WTC11 (cell line): ENCODE measurements at regions of chr6 and their contacts with region 1.

Region 1: GRCh38 chr6:45714741-45715507 is 300.7 kb downstream of the CLIC5 start:
- DNase-seq: peak; percentile 50
- ATAC-seq: peak; percentile 97
- H3K4me3 Mint-ChIP-seq: no peak overlapping the region
- H3K27ac Mint-ChIP-seq: no peak overlapping the region
- H3K4me1 Mint-ChIP-seq: peaks cover 6% of the 10 kb centered on the region
- H3K27me3 Mint-ChIP-seq: no peaks in the 10 kb centered on the region
- CTCF ChIP-seq: 0 out of 2 replicates have a peak, but pooled peaks have one; percentile 29

Region 2: GRCh38 chr6:44630125-44631028 is 1084.5 kb before region 1 on chr6:
- CTCF ChIA-PET with region 1: interaction called, 22 read pairs
- POLR2A ChIA-PET with region 1: no interaction called
- DNase-seq: peak; percentile 78
- ATAC-seq: peak; percentile 89
- H3K4me3 Mint-ChIP-seq: no peak overlapping the region
- H3K27ac Mint-ChIP-seq: no peak overlapping the region
- H3K4me1 Mint-ChIP-seq: peaks cover 41% of the 10 kb centered on the region
- H3K27me3 Mint-ChIP-seq: peaks cover 4% of the 10 kb centered on the region
- CTCF ChIP-seq: 0 out of 2 replicates have a peak, but pooled peaks have one; percentile 33

Region 3: GRCh38 chr6:45377554-45378333 is 337.2 kb before region 1 on chr6 and contains the start of gene SUPT3H:
- CTCF ChIA-PET with region 1: interaction called, 14 read pairs
- POLR2A ChIA-PET with region 1: no interaction called
- DNase-seq: peak; percentile 87
- ATAC-seq: peak; percentile 92
- H3K4me3 Mint-ChIP-seq: peak within 1 kb of the TSS; percentile 92
- H3K27ac Mint-ChIP-seq: peak within 1 kb of the TSS; percentile 98
- H3K4me1 Mint-ChIP-seq: peaks cover 17% of the 10 kb centered on the region
- H3K27me3 Mint-ChIP-seq: no peaks in the 10 kb centered on the region; the same call in 1 of the 2 replicates
- CTCF ChIP-seq: no peak
- total RNA-seq, gene SUPT3H: 15.3 to 21.9 TPM (median 19.2 TPM) in 3 replicates

Region 4: DNA sequence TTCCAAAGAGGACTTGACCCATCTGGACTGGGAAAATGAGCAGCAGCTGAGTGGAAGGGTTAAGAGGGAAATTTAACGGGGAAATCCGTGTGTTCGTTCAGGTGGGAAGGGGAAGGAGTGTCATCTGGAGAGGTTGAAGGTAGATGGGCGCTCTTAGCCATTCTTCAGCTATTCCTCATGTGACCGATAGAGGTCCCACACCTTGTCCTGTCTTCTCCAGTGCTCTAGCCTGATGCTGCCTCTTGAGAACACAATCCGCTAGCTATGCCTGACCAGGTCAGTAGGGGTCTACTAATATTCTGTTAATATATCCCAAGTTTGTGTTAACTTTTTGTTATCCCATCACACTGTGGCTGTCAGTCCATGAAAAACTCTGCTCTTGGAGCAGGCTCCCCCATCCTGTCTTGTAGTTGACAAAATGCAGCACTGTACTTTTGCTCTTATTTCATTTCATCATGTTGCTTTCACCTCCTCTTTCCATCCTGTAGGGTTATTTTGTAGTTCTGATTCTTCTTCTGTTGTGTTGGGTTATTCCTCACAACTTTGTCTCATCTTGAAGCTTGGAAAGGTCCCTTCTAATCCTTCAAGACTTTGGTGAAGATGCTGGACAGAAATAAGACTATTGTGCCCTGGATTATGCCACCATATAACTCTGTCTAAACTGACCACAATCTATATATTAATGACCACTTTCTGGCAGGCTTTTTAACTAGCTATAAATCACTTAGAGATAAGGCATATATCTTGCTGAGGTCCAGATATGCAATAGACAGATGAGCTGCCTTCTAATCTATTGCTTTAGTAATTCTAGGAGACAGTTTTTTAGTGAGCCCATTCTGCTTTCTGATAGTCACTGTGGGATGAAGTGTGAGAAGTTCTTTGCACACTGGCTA is 213.8 kb before region 1 on chr6:
- CTCF ChIA-PET with region 1: interaction called, 27 read pairs
- POLR2A ChIA-PET with region 1: no interaction called
- DNase-seq: peak; percentile 30
- ATAC-seq: peak; percentile 95
- H3K4me3 Mint-ChIP-seq: no peak overlapping the region
- H3K27ac Mint-ChIP-seq: no peak overlapping the region
- H3K4me1 Mint-ChIP-seq: peaks cover 26% of the 10 kb centered on the region
- H3K27me3 Mint-ChIP-seq: no peaks in the 10 kb centered on the region
- CTCF ChIP-seq: peak; percentile 67; the same call in 1 of the 2 replicates

Region 5: DNA sequence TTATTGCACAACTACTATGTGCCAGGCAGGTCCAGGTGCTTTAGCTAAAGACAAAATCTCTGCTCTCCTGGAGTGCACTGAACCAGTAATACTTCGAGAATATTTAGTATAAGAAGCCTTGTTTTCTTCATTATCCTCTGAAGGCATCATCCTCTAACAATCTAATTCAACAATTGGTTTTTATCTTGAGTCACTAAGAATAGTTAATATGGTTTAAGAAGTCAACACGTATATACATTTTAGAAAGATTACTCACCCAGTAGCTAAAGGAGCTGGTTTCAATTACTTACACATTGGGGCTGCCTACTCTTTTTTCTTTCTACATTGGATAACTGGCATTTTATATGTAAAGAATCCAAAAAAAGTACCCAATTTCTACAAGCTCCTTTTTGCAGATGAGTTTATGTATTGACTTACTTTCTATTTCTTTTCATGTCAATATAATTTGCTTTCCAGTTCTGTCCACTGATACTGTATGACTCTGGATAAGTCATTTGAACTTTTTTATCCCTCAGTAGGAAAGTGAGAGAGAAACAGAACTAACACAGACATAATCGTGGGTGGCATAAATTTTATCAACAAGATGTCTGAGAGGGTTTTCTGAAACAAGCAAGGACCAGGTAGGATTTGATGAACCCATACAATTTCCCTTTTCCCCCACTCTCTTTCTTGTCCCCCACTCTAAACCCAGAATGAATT is 11.7 kb before region 1 on chr6:
- CTCF ChIA-PET with region 1: interaction called, 14 read pairs
- POLR2A ChIA-PET with region 1: no interaction called
- DNase-seq: no peak
- ATAC-seq: no peak
- H3K4me3 Mint-ChIP-seq: no peak overlapping the region
- H3K27ac Mint-ChIP-seq: no peak overlapping the region
- H3K4me1 Mint-ChIP-seq: no peaks in the 10 kb centered on the region
- H3K27me3 Mint-ChIP-seq: no peaks in the 10 kb centered on the region
- CTCF ChIP-seq: no peak